ENCODE measurements at regions of chrX and their contacts with region 1.

Region 1: DNA sequence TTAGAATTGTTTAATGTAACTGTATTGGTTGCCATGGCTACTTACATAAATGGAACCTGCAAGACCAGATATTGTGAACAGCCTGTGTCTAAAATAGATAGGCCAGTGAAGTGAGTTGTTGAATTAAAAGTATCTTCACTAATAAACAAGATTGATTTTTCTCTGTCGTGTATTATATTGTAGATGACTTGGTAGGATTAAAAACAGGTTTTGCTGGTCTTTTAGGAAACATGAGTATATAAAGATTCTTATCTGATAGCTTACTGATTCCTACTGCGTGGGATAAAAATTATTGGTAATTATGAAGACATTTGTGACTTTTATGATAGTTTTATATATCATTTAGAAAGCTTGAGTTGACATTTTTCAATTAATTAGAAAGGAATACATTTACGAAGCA is 162.1 kb downstream of the KDM6A start:
- DNase-seq: no peak
- H3K4me3 ChIP-seq: no peak overlapping the region
- H3K27ac ChIP-seq: no peak overlapping the region
- H3K4me1 ChIP-seq: no peaks in the 10 kb centered on the region
- H3K27me3 ChIP-seq: no peaks in the 10 kb centered on the region
- CTCF ChIP-seq: no peak
- EP300 ChIP-seq: no peak
- POLR2A ChIP-seq: no peak

Region 2: DNA sequence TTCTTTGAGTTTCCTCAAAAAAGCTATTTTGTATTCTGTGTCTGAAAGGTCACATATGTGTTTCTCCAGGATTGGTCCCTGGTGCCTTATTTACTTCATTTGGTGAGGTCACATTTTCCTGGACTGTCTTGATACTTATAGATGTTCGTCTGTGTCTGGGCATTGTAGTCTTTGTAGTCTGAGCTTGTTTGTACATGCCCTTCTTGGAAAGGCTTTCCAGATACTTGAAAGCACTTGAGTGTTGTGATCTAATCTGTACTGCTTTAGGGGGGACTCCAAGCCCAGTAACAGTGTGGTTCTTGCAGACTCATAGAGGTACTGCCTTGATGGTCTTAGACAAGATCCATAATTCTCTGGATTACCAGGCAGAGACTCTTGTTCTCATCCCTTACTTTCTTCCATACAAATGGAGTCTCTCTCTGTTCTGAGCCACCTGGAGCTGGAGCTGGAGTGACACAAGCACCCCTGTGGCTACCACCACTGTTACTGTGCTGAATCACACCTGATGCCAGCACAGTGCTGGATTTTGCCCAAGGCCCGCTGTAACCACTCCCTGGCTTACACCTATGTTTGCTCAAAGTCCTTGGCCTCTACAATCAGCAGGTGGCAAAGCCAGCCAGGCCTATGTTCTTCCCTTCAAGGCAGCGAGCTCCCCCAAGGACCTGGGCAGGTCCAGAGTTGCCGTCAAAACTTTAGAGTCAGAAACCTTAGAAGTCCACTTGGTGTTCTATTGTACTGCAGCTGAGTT is 619.3 kb before region 1 on chrX:
- in situ Hi-C with region 1: no loop called
- intact Hi-C with region 1: no loop called
- DNase-seq: peak; percentile 24
- H3K4me3 ChIP-seq: no peak overlapping the region
- H3K27ac ChIP-seq: no peak overlapping the region
- H3K4me1 ChIP-seq: no peaks in the 10 kb centered on the region
- H3K27me3 ChIP-seq: no peaks in the 10 kb centered on the region
- CTCF ChIP-seq: no peak
- EP300 ChIP-seq: no peak
- POLR2A ChIP-seq: no peak

Region 3: DNA sequence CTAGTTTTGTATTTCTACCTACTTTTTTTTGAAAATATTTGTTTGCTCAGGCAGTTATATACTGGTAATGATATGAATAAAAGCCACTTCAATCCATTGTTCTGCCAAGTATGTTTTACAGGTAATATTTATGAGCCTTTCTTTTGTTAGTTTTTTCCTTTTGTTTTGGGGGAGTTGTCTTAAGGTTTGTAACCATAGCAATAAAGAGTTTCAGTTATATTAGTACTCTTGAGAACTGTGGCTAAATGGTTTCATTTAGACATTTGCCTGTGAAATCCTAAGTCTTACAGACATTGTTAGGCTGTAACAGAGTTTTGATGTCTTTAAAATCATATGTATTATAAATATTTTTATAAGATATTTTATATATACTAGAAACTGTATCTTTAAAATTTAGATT is 15.5 kb after region 1 on chrX:
- in situ Hi-C with region 1: no loop called
- intact Hi-C with region 1: loop called (anchors 2 kb)
- DNase-seq: no peak
- H3K4me3 ChIP-seq: no peak overlapping the region
- H3K27ac ChIP-seq: no peak overlapping the region
- H3K4me1 ChIP-seq: no peaks in the 10 kb centered on the region
- H3K27me3 ChIP-seq: no peaks in the 10 kb centered on the region
- CTCF ChIP-seq: no peak
- EP300 ChIP-seq: no peak
- POLR2A ChIP-seq: no peak

Region 4: DNA sequence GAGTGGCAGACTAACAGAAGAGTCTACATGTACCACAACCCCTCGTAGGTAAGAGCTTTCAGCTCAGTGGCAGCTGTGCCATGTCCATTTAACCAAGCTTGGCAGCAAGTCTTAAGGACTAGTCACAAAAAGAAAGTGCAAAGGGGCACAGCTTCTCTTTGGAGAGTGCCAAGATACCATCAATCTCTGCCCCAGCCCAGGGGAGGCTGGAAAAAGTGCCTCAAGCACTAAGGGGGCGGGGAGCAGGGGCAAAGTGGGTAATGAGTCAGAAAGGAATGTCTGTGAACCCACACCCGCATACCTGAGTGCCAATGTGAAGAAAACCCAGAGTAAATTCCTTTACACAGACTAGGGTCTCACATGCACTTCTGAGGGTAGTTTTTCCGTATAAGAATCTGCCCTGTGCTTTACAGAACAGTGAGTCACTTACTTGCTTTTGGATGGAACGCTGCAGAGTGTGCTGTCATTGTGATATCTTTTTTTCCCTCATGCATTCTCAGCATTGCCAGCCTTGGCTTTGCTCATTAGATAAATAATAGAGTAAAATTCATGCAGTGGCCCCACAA is 1290.3 kb after region 1 on chrX:
- in situ Hi-C with region 1: no loop called
- intact Hi-C with region 1: loop called (anchors 5 kb)
- DNase-seq: no peak
- H3K4me3 ChIP-seq: no peak overlapping the region
- H3K27ac ChIP-seq: no peak overlapping the region
- H3K4me1 ChIP-seq: peaks cover 0 to 9% (median 4%) of the 10 kb centered on the region in 4 donors
- H3K27me3 ChIP-seq: no peaks in the 10 kb centered on the region
- CTCF ChIP-seq: no peak
- EP300 ChIP-seq: no peak
- POLR2A ChIP-seq: no peak

Region 5: DNA sequence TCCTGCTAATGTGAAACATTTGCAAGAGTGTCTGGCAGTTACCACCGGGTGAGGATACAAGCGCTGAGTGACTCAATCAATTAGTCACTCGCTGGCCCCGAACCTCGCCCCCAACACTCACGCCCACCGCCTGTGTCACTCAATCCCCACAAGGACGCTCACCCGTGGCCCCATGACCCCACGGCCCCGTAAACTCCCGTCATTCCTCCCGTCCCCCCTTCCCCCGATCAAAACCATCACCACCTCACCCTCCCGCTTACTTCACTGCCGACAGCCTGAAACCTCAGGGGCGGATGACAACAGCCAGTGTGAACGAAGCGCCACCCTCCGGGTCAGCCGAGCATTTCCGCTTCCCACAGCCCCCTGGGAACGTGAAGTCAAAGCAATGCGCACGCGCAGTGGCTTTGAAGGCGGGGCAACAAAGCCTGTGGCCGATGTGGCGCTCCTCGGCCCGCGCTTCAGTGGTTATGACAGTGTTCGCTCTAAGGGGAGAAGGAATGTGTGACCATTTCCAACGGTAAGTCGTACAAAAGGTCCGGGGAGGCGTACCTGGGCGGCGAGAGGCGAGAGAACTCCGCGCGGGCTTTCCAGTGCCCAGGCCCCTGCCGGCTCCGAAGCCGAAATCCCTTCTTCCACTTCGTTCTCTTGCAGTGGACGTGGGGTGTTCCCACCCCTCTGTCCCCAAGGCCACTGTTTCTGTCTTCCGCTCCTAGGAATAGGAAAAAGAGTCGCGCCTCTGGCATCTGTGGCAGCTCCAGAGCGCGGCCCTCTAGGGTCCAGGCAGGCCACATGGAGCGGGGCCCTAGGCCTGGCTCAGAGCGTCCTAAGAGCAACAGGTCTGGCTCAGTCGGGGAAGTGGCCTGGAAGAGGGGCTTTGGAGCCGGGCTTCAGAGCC is 1510.3 kb after region 1 on chrX and contains the start of gene ZNF674:
- in situ Hi-C with region 1: no loop called
- intact Hi-C with region 1: no loop called
- DNase-seq: peak; percentile 94
- H3K4me3 ChIP-seq: peak within 1 kb of the TSS; percentile 51 to 81 (median 72)
- H3K27ac ChIP-seq: peak within 1 kb of the TSS; percentile 73 to 91 (median 80)
- H3K4me1 ChIP-seq: peaks cover 0 to 18% (median 6%) of the 10 kb centered on the region in 4 donors
- H3K27me3 ChIP-seq: no peaks in the 10 kb centered on the region
- CTCF ChIP-seq: peak; percentile 23 to 68 (median 34)
- EP300 ChIP-seq: no peak
- POLR2A ChIP-seq: peak; percentile 79
- total RNA-seq, gene ZNF674: 0.37 to 11.0 (median 5.6) TPM

Measured in transverse colon (tissue), 4 donors.